Head of caudate nucleus (tissue), 42 donors: ENCODE measurements at regions of chr9 and their contacts with region 1.

Region 1: DNA sequence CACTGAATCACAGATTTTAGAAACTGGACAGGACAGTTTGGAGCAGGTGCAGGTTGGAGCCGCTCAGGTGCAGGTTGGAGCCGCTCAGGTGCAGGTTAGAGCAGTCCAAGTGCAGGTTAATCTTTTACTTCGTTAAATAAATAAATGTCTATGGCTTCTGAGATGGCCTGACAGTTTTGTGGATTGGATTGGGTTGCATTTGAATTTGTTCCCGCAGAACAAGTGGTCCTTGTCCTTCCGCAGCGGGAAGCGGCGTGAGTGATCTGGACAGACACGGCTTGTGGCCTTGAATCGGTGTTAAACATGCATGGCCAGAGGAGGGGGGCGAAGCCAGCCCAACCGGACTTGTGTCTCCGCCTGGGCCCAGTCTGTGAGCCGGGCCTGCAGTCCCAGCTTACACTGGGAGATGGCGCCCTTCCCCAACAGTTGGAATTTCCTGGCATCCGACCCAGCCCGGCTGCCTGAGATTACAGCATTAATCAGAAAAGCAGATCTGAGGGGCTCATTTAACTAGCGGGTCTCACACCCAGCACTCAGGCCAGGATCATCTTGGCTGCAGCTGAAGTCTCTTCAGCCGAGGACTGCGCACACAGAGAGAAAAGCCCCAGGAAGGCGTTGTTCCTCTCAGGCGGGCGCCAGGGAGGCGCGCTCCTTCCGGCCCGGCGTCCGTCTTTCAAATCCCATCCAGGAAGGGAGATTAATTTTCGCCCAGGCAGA is 1.5 kb upstream of the OLFM1 start:
- DNase-seq: peak; percentile 70 to 94 (median 86)

Region 2: DNA sequence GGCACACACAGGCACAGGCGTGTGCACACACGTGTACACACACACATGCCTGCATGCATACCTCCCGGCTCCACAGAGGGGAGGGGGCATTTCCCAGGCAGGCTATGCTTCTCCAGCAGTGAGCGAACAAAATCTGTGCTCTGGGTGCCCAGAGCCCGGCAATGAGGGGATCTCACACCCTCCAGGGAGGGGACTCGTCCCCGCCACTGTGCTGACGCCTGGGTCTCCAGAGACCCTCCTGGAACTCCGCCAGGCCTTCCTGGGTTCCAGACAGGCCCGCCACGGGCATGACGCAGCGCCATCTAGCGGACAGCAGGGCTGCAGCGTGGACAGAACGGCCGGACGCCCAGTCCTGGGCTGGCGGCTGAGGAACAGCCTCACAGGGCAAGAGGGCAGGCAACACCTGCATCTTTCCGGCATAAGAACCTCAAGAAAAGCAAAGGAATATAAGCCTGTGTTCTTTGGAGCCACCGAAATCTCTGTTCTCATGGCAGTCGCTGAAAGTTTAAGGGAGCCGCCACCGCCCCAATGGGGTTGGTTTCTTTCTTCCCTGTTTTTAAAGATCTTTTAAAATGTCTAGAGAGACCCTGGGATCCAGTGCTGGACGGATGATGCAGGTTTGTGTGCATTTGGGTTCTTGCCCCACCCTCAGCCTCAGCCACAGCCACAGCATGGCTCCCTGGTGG is 258.0 kb after region 1 on chr9:
- intact Hi-C with region 1: loop called (anchors 5 kb)
- DNase-seq: peak; percentile 33 to 86 (median 66)

Region 3: DNA sequence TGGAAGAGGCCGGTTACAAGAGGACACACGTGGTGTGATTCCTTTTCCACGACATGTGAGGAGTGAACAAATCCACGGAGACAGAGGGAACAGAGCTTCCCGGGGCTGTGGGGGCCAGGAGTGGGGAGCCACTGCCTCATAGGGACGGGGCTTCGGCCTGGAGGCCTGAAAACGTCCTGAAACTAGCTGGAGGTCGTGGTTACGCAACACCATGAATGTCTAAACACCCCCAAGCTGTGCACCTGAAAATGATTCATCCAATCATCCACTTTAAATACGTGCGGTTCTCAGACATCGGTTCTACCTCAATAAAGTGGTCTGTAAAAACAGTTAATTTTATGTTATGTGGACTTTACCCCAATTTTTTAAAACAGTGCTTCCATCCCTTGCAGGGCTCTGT is 328.3 kb after region 1 on chr9:
- intact Hi-C with region 1: loop called (anchors 2 kb)
- DNase-seq: peak in 2 of 42 donors; percentile 27 to 38